PC-9 (cell line): ENCODE measurements at regions of chr17 and their contacts with region 1.

Region 1: DNA sequence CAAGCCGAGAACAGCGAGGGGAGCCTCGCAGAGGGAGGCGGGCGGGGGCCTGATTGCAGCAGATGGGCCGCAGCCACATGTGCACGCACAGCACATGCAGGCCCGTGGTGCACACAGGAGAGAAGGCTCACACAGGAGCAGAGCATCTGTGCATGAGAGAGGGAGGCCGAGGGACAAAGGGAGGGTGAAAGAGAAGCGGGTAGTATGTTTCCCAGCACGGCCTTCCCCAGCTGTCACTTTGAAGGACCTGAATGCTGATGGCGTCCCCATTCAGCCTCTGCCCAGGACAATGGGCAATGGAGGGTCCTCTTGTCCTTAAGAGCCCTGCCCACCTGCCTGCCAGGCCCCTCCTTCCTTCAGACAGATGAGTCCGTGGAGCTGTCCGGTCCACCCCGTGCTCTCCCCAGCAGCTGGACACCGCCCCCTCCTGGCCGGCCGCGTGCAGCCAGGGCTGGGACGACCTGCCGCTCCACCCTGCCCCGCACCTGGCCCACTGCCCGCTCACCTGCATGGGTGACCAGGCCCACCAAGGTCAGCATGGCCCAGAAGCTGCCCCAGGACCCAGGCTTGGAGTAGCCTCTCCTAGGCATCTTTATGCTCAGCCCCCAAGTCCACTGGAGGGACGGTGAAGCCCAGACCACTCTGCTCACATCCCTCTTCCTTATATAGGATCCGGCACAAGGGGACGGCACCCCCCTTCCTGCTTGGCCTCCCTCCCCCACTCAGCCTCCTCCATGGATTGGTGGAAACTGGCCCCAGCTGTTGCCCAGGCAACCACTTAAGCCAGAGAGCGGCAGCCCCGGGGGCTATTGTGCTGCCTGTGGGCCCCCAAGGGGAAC is at the start of gene BTBD17:
- DNase-seq: peak in 1 of 2 experiments; percentile 50
- H3K4me3 ChIP-seq: no peak within 1 kb of the TSS
- H3K27ac ChIP-seq: no peak within 1 kb of the TSS
- H3K4me1 ChIP-seq: no peaks in the 10 kb centered on the region
- H3K27me3 ChIP-seq: peaks cover 73% of the 10 kb centered on the region
- CTCF ChIP-seq: peak; percentile 67
- total RNA-seq, gene BTBD17: not detected in 2 replicates

Region 2: GRCh38 chr17:74203439-74204240 is 157.8 kb before region 1 on chr17 and contains the start of gene RPL38:
- CTCF ChIA-PET with region 1: interaction called, 11 read pairs
- POLR2A ChIA-PET with region 1: no interaction called
- intact Hi-C with region 1: no loop called
- DNase-seq: peak; percentile 90 to 91
- H3K4me3 ChIP-seq: peak within 1 kb of the TSS; percentile 93
- H3K27ac ChIP-seq: peak within 1 kb of the TSS; percentile 80
- H3K4me1 ChIP-seq: peaks cover 17% of the 10 kb centered on the region
- H3K27me3 ChIP-seq: peaks cover 46% of the 10 kb centered on the region
- CTCF ChIP-seq: peak; percentile 89
- total RNA-seq, gene RPL38: 761 and 961 TPM in 2 replicates

Region 3: GRCh38 chr17:74305865-74306654 is 55.4 kb before region 1 on chr17:
- CTCF ChIA-PET with region 1: no interaction called
- POLR2A ChIA-PET with region 1: no interaction called
- intact Hi-C with region 1: loop called (anchors 5 kb)
- DNase-seq: no peak
- H3K4me3 ChIP-seq: no peak overlapping the region
- H3K27ac ChIP-seq: no peak overlapping the region
- H3K4me1 ChIP-seq: no peaks in the 10 kb centered on the region
- H3K27me3 ChIP-seq: peaks cover 58% of the 10 kb centered on the region
- CTCF ChIP-seq: no peak; the same call in 1 of the 2 replicates

Region 4: GRCh38 chr17:74374858-74375257 is 13.4 kb after region 1 on chr17:
- CTCF ChIA-PET with region 1: no interaction called
- POLR2A ChIA-PET with region 1: no interaction called
- intact Hi-C with region 1: no loop called
- DNase-seq: no peak
- H3K4me3 ChIP-seq: no peak overlapping the region
- H3K27ac ChIP-seq: no peak overlapping the region
- H3K4me1 ChIP-seq: peaks cover 4% of the 10 kb centered on the region
- H3K27me3 ChIP-seq: peaks cover 89% of the 10 kb centered on the region
- CTCF ChIP-seq: no peak